Mammary epithelial cell (primary cell): ENCODE measurements at regions of chr2 and their contacts with region 1.

Region 1: GRCh38 chr2:204538182-204539018 is 6.9 kb upstream of the PARD3B start:
- DNase-seq: no peak
- H3K4me3 ChIP-seq: no peak overlapping the region
- H3K27ac ChIP-seq: no peak overlapping the region
- H3K4me1 ChIP-seq: peaks cover 3% of the 10 kb centered on the region
- H3K27me3 ChIP-seq: no peaks in the 10 kb centered on the region
- CTCF ChIP-seq: no peak

Region 2: GRCh38 chr2:204441316-204441715 is 97.1 kb before region 1 on chr2:
- CTCF ChIA-PET with region 1: no interaction called
- dilution Hi-C with region 1: loop called (anchors 5 kb)
- in situ Hi-C with region 1: no loop called
- intact Hi-C with region 1: no loop called
- DNase-seq: no peak
- H3K4me3 ChIP-seq: no peak overlapping the region
- H3K27ac ChIP-seq: no peak overlapping the region
- H3K4me1 ChIP-seq: no peaks in the 10 kb centered on the region
- H3K27me3 ChIP-seq: peaks cover 2% of the 10 kb centered on the region
- CTCF ChIP-seq: no peak

Region 3: DNA sequence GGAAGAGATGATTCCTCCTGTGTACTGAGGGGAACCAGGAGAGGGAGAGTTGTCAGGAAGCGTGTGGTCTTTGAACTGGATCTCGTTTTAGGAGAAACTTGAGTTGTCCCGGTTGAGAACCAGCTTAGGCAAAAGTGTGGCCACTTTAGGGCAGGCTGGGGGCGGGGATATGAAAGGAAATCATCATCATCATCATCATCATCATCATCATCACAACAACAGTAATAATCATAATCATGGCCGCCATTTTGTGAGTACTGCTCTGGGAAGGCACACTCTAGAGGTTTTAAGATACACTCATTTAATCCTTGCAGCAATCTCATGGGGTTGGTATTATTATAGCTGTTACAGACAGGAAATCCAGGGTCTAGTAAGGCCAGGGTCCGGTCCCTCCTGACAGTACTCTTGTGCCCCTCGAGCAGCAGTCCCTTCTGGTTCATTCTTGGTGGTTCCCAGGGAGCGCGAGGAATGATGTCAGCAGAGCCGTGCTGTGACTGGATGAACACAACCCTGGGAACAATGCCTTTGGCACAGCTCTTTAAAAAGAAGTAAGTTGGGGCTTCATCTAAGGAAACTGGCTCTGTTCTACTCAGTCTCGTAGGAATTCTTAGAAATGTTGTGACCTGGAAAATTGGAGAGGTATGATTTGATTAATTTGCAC is 40.7 kb after region 1 on chr2:
- CTCF ChIA-PET with region 1: no interaction called
- dilution Hi-C with region 1: no loop called
- in situ Hi-C with region 1: no loop called
- intact Hi-C with region 1: loop called (anchors 1 kb)
- DNase-seq: no peak
- H3K4me3 ChIP-seq: no peak overlapping the region
- H3K27ac ChIP-seq: no peak overlapping the region
- H3K4me1 ChIP-seq: no peaks in the 10 kb centered on the region
- H3K27me3 ChIP-seq: no peaks in the 10 kb centered on the region
- CTCF ChIP-seq: no peak